ENCODE measurements at regions of chr1 and their contacts with region 1.

Region 1: DNA sequence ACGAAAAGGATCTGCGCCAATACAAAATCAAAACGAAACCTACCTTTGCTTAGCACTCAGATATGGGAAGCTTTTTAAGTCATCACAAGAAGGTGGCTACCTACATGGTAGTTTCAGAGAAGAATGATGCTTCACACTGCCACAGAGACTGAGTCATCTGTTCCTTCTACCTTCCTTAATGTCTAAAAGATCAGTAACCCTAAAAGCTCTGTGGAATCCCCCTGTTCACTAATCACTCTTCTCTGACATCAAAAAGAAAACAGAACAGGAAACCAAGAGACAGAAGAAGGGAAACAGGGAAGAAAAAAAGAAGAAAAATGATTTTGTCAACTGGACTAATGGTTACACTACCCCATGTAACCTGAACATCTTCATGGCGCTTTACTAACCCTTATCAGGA is 177.2 kb downstream of the SMYD3 start:
- DNase-seq: no peak
- ATAC-seq: peak; percentile 47
- H3K4me3 ChIP-seq: no peak overlapping the region
- H3K4me3 Mint-ChIP-seq: peak overlapping the region in 1 of 10 donors; percentile 76
- H3K27ac ChIP-seq: no peak overlapping the region
- H3K27ac Mint-ChIP-seq: peak overlapping the region in 2 of 9 donors; percentile 41 to 81
- H3K4me1 ChIP-seq: no peaks in the 10 kb centered on the region
- H3K4me1 Mint-ChIP-seq: peaks cover 0 to 31% (median 0%) of the 10 kb centered on the region in 7 donors
- H3K27me3 ChIP-seq: no peaks in the 10 kb centered on the region
- H3K27me3 Mint-ChIP-seq: no peaks in the 10 kb centered on the region

Region 2: DNA sequence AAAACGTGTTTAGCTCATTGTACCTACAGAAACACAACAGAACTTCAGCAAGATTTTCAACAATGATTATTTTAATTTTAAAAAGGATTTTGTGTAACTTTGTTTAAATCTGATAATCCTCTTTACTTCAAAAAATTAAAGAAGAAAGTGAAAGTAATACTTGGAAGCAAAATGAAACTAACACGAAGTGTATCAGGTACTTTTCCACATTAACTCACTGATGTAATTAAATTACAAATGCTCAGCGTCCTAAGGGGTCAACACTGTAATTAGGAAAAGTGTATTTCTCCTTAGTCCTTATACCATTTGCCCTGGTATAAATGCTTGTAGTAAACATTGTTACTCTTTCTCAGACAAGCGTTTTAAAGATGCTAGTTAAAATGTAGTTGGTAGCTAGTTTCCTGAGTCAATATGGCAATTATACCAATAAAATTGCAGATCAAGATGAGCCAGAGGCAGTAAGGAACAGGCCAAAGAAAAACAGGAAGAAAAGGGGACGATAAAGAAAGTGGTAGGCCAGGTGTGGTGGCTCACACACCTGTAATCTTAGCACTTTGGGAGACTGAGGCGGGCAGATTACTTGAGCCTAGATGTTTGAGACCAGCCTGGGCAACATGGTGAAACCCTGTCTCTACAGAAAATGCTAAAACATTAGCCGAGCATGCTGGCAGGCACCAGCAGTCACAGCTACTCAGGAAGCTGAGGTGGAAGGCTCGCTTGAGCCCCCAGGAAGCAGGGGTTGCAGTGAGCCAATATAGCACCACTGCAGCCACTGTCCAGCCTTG is 375.8 kb before region 1 on chr1:
- CTCF ChIA-PET with region 1: no interaction called
- POLR2A ChIA-PET with region 1: no interaction called
- intact Hi-C with region 1: loop called in 1 of 2 experiments (anchors 10 kb)
- DNase-seq: peak in 6 of 9 donors; percentile 17 to 49 (median 34)
- ATAC-seq: peak; percentile 45
- H3K4me3 ChIP-seq: peak overlapping the region; percentile 31
- H3K4me3 Mint-ChIP-seq: peak overlapping the region in 8 of 10 donors; percentile 56 to 90 (median 78)
- H3K27ac ChIP-seq: peak overlapping the region; percentile 76
- H3K27ac Mint-ChIP-seq: peak overlapping the region in 1 of 9 donors; percentile 97
- H3K4me1 ChIP-seq: peaks cover 25 to 27% of the 10 kb centered on the region in 2 donors
- H3K4me1 Mint-ChIP-seq: peaks cover 9 to 29% (median 19%) of the 10 kb centered on the region in 7 donors
- H3K27me3 ChIP-seq: no peaks in the 10 kb centered on the region
- H3K27me3 Mint-ChIP-seq: no peaks in the 10 kb centered on the region

Region 3: DNA sequence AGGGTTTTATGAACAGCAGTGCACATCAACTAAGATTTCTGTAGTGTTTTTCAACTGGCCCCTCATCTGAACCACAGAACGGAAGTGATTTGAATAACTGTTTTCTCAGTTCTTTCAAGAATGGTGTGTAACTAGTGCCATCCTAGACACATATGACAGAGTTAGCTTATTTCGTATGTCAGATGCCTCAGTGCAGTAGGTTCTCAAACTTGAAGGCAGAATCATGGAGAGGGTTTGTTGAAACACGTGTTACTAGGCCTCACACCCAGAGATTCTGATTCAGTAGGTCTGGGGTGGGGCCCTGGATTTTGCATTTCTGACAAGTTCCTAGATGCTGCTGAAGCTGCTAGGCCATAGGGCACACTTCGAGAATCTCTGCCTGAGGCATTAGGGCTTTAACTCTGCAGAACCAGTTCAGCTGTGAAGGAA is 443.3 kb after region 1 on chr1:
- CTCF ChIA-PET with region 1: no interaction called
- POLR2A ChIA-PET with region 1: no interaction called
- intact Hi-C with region 1: no loop called
- DNase-seq: no peak
- ATAC-seq: no peak
- H3K4me3 ChIP-seq: no peak overlapping the region
- H3K4me3 Mint-ChIP-seq: no peak overlapping the region
- H3K27ac ChIP-seq: no peak overlapping the region
- H3K27ac Mint-ChIP-seq: no peak overlapping the region
- H3K4me1 ChIP-seq: no peaks in the 10 kb centered on the region
- H3K4me1 Mint-ChIP-seq: peaks cover 0 to 6% (median 0%) of the 10 kb centered on the region in 7 donors
- H3K27me3 ChIP-seq: no peaks in the 10 kb centered on the region
- H3K27me3 Mint-ChIP-seq: no peaks in the 10 kb centered on the region

Measured in naive thymus-derived CD4-positive, alpha-beta T cell (primary cell).